Activated CD4-positive, alpha-beta T cell treated with anti-CD3 and anti-CD28 coated beads, Interleukin-2, amount 10 ng/mL, durations not matched to agents 24 days and 14 days (primary cell): ENCODE measurements at regions of chr3 and their contacts with region 1.

Region 1: GRCh38 chr3:25427942-25428788 is at the start of gene RARB:
- DNase-seq: no peak
- H3K4me3 Mint-ChIP-seq: no peak within 1 kb of the TSS
- H3K27ac Mint-ChIP-seq: no peak within 1 kb of the TSS
- H3K4me1 Mint-ChIP-seq: peaks cover 3% of the 10 kb centered on the region
- H3K27me3 Mint-ChIP-seq: peaks cover 42% of the 10 kb centered on the region
- total RNA-seq, gene RARB: not detected in 2 replicates

Region 2: GRCh38 chr3:25751725-25752124 is 323.6 kb after region 1 on chr3:
- intact Hi-C with region 1: loop called (anchors 10 kb)
- DNase-seq: no peak
- H3K4me3 Mint-ChIP-seq: no peak overlapping the region
- H3K27ac Mint-ChIP-seq: no peak overlapping the region
- H3K4me1 Mint-ChIP-seq: peaks cover 2% of the 10 kb centered on the region
- H3K27me3 Mint-ChIP-seq: no peaks in the 10 kb centered on the region